K562 (cell line): ENCODE measurements at regions of chr6 and their contacts with region 1.

Region 1: GRCh38 chr6:43629505-43630300 is 639 bp upstream of the GTPBP2 start:
- DNase-seq: peak; percentile 92 to 99 (median 96)
- ATAC-seq: peak; percentile 75
- H3K4me3 ChIP-seq: peak overlapping the region; percentile 58
- H3K27ac ChIP-seq: peak overlapping the region; percentile 97
- H3K4me1 ChIP-seq: peaks cover 40 to 59% of the 10 kb centered on the region in 2 experiments
- H3K27me3 ChIP-seq: no peaks in the 10 kb centered on the region; a peak in 1 of 5 replicates
- CTCF ChIP-seq: no peak
- EP300 ChIP-seq: peak; percentile 53; the same call in 1 of the 2 replicates
- POLR2A ChIP-seq: peak; percentile 97
- RAD21 ChIP-seq: peak in 1 of 2 experiments; percentile 5; a peak in 2 of 4 replicates

Region 2: GRCh38 chr6:43575772-43576551 is 53.7 kb before region 1 on chr6 and contains the starts of genes POLH and XPO5:
- CTCF ChIA-PET with region 1: no interaction called
- POLR2A ChIA-PET with region 1: interaction called, 14 read pairs
- in situ Hi-C with region 1: no loop called
- intact Hi-C with region 1: loop called (anchors 2 kb)
- DNase-seq: peak; percentile 98 to 99 (median 98)
- ATAC-seq: peak; percentile 95
- H3K4me3 ChIP-seq: peak within 1 kb of the TSS; percentile 74
- H3K27ac ChIP-seq: peak within 1 kb of the TSS; percentile 84
- H3K4me1 ChIP-seq: peaks cover 7 to 14% of the 10 kb centered on the region in 2 experiments; a peak in 4 of 5 replicates
- H3K27me3 ChIP-seq: no peaks in the 10 kb centered on the region
- CTCF ChIP-seq: peak; percentile 35 to 59 (median 50); a peak in 5 of 6 replicates
- EP300 ChIP-seq: peak; percentile 70
- POLR2A ChIP-seq: peak; percentile 96
- RAD21 ChIP-seq: 0 out of 4 replicates have a peak, but pooled peaks of 1 of the 2 experiments have one; percentile 18
- polyA plus RNA-seq, gene POLH: 5.8 to 10.6 TPM
- polyA plus RNA-seq, gene XPO5: 36.0 to 72.3 TPM

Region 3: GRCh38 chr6:43644931-43645612 is 15.4 kb after region 1 on chr6 and contains the start of gene RSPH9:
- CTCF ChIA-PET with region 1: no interaction called
- POLR2A ChIA-PET with region 1: interaction called, 206 read pairs
- in situ Hi-C with region 1: no loop called
- intact Hi-C with region 1: no loop called
- DNase-seq: peak in 2 of 4 experiments; percentile 52 to 64
- ATAC-seq: peak; percentile 24
- H3K4me3 ChIP-seq: no peak within 1 kb of the TSS
- H3K27ac ChIP-seq: no peak within 1 kb of the TSS
- H3K4me1 ChIP-seq: peaks cover 16 to 17% of the 10 kb centered on the region in 2 experiments
- H3K27me3 ChIP-seq: no peaks in the 10 kb centered on the region; a peak in 1 of 5 replicates
- CTCF ChIP-seq: no peak
- EP300 ChIP-seq: no peak
- POLR2A ChIP-seq: no peak
- RAD21 ChIP-seq: no peak
- polyA plus RNA-seq, gene RSPH9: 0.39 to 0.60 TPM

Region 4: GRCh38 chr6:43714311-43715055 is 84.8 kb after region 1 on chr6:
- CTCF ChIA-PET with region 1: no interaction called
- POLR2A ChIA-PET with region 1: interaction called, 17 read pairs
- in situ Hi-C with region 1: no loop called
- intact Hi-C with region 1: no loop called
- DNase-seq: peak; percentile 73 to 85 (median 80)
- ATAC-seq: peak; percentile 73
- H3K4me3 ChIP-seq: no peak overlapping the region
- H3K27ac ChIP-seq: no peak overlapping the region; the same call in 2 of the 3 replicates
- H3K4me1 ChIP-seq: peaks cover 28 to 29% of the 10 kb centered on the region in 2 experiments
- H3K27me3 ChIP-seq: no peaks in the 10 kb centered on the region
- CTCF ChIP-seq: no peak; a peak in 1 of 6 replicates
- EP300 ChIP-seq: peak; percentile 76
- POLR2A ChIP-seq: no peak
- RAD21 ChIP-seq: no peak

Region 5: DNA sequence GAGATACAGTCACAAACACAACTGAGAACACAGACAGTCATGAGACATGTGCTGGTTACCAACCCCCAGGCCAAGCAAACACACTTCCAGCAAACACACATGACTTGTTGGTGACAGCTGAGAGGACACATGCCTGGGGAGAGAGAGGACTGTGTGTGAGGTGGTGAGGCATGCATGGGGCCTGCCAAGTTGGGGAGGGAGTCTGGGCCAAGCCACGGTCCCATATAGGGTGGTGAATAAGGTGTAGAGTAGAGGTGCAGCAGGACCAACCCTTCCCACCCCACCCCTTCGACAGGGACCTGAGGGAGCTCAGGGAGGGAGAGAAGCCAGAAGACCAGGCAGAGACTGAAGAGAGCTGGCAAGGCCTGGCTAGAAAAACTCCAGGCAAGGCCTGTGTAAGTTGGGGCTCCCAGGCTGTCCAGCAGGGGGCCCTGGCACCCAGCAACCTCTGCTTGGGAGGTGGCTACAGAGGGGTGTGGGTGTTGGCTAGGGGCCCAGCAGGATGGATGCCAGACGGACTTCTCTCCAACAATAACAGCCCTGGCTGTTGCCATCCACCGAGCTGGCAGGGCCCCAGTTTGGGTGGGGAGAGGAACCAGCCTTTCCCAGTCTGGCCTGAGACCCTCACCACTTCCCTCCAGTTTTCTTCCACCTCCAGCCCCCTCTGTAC is 591.7 kb after region 1 on chr6:
- CTCF ChIA-PET with region 1: no interaction called
- POLR2A ChIA-PET with region 1: interaction called, 5 read pairs
- in situ Hi-C with region 1: no loop called
- intact Hi-C with region 1: loop called (anchors 10 kb)
- DNase-seq: peak; percentile 71 to 92 (median 81)
- ATAC-seq: peak; percentile 65
- H3K4me3 ChIP-seq: no peak overlapping the region
- H3K27ac ChIP-seq: peak overlapping the region; percentile 48; the same call in 1 of the 3 replicates
- H3K4me1 ChIP-seq: peaks cover 73 to 88% of the 10 kb centered on the region in 2 experiments
- H3K27me3 ChIP-seq: no peaks in the 10 kb centered on the region
- CTCF ChIP-seq: peak; percentile 94 to 97 (median 94)
- EP300 ChIP-seq: no peak
- POLR2A ChIP-seq: no peak
- RAD21 ChIP-seq: peak; percentile 66 to 83